ENCODE measurements at regions of chr2 and their contacts with region 1.

Region 1: GRCh38 chr2:28452534-28453081 is 43.3 kb upstream of the PLB1 start:
- DNase-seq: peak; percentile 49
- H3K4me3 ChIP-seq: no peak overlapping the region
- H3K27ac ChIP-seq: no peak overlapping the region
- H3K4me1 ChIP-seq: no peaks in the 10 kb centered on the region
- CTCF ChIP-seq: peak; percentile 86

Region 2: GRCh38 chr2:27703638-27704341 is 748.8 kb before region 1 on chr2:
- CTCF ChIA-PET with region 1: no interaction called
- POLR2A ChIA-PET with region 1: no interaction called
- intact Hi-C with region 1: loop called (anchors 5 kb)
- DNase-seq: peak; percentile 79
- H3K4me3 ChIP-seq: no peak overlapping the region
- H3K27ac ChIP-seq: no peak overlapping the region
- H3K4me1 ChIP-seq: no peaks in the 10 kb centered on the region
- CTCF ChIP-seq: peak; percentile 97

Region 3: GRCh38 chr2:27754138-27754588 is 698.4 kb before region 1 on chr2:
- CTCF ChIA-PET with region 1: no interaction called
- POLR2A ChIA-PET with region 1: no interaction called
- intact Hi-C with region 1: loop called (anchors 2 kb)
- DNase-seq: peak; percentile 60
- H3K4me3 ChIP-seq: no peak overlapping the region
- H3K27ac ChIP-seq: no peak overlapping the region
- H3K4me1 ChIP-seq: no peaks in the 10 kb centered on the region
- CTCF ChIP-seq: peak; percentile 87

Region 4: GRCh38 chr2:28155627-28156026 is 297.0 kb before region 1 on chr2:
- CTCF ChIA-PET with region 1: no interaction called
- POLR2A ChIA-PET with region 1: no interaction called
- intact Hi-C with region 1: loop called (anchors 2 kb)
- DNase-seq: peak; percentile 3
- H3K4me3 ChIP-seq: no peak overlapping the region
- H3K27ac ChIP-seq: no peak overlapping the region
- H3K4me1 ChIP-seq: no peaks in the 10 kb centered on the region
- CTCF ChIP-seq: peak; percentile 77

Region 5: DNA sequence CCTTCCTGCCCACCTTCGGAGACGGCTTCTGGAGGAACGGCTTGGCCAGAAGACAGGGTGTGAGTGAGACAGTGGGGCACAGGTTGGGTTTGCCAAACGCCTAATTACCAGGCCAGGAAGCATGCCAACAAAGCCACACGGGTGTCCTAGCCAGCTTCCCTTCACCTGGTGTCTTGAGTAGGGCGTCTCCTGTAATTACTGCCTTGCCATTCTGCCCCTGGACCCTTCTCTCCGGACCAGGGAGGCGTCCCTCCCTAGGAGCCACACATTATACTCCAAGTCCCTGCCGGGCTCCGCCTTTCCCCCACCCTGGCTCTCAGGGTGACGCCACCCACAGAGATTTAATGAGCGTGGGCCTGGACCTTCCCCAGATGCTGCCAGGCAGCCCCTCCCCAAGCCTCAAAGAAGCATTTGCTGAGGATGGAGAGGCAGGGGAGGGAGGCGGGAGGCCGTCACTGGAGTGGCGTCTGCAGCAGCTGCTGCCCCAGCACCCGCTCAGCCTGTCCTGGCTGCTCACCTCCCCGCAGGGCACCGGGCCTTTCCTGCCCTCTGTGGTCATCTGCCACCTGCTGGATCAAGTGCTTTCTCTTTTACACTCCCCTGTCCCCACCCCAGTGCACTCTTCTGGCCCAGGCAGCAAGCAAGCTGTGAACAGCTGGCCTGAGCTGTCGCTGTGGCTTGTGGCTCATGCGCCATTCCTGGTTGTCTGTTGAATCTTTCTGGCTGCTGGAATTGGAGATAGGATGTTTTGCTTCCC is 39.3 kb before region 1 on chr2:
- CTCF ChIA-PET with region 1: no interaction called
- POLR2A ChIA-PET with region 1: no interaction called
- intact Hi-C with region 1: no loop called
- DNase-seq: no peak
- H3K4me3 ChIP-seq: no peak overlapping the region
- H3K27ac ChIP-seq: no peak overlapping the region
- H3K4me1 ChIP-seq: no peaks in the 10 kb centered on the region
- CTCF ChIP-seq: no peak

Region 6: DNA sequence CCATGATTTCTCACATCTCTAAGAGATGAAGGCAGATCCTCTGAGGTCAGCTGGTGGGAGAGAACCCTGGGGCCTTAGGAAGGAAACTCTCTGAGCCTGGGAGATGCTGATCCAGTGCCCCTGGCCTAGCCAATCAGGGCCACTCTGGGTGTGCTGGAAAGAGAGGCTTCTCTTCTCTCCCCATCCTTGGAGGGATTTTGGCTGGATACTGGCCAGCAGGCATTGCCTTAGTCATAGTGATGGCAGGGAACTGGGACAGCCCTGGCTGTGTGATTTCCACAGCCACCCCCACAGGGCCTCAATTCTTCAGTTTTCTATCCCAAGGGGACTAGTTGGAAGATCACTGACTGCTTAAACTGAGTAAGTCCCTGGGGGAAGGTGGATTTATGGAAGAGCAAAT is 16.7 kb after region 1 on chr2:
- CTCF ChIA-PET with region 1: no interaction called
- POLR2A ChIA-PET with region 1: no interaction called
- intact Hi-C with region 1: no loop called
- DNase-seq: no peak
- H3K4me3 ChIP-seq: no peak overlapping the region
- H3K27ac ChIP-seq: no peak overlapping the region
- H3K4me1 ChIP-seq: no peaks in the 10 kb centered on the region
- CTCF ChIP-seq: no peak

Region 7: GRCh38 chr2:28507806-28508764 is 55.5 kb after region 1 on chr2:
- CTCF ChIA-PET with region 1: no interaction called
- POLR2A ChIA-PET with region 1: no interaction called
- intact Hi-C with region 1: no loop called
- DNase-seq: no peak
- H3K4me3 ChIP-seq: no peak overlapping the region
- H3K27ac ChIP-seq: no peak overlapping the region
- H3K4me1 ChIP-seq: no peaks in the 10 kb centered on the region
- CTCF ChIP-seq: no peak